ENCODE measurements at regions of chr19 and their contacts with region 1.

Region 1: DNA sequence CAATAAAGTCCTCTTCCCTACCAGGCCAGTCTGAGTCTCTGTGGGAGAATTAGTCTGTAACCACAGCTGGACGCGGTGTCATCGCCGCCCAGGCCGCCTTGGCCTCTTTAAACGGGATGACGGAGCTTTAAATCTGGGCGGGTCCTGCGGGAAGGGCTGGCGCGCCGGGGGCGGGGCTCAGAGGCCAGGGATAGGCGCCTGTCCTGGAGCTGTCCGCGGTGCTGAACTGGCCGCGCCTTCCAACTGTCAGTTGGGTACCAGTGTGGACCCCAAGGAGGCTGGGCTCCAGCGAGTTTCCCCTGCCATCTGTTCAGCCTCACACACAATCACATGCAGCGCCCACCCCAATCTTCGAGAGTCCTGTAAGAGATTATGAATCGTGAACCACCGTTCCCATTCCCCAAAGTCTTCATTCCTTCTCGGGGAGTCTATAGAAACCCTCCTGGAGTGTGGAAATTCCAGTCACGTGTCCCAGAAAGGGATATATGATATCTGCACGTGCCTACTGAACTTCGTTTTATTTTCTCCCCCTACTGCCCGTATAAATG is 11.5 kb downstream of the APLP1 start:
- DNase-seq: peak; percentile 91 to 95
- H3K4me3 ChIP-seq: no peak overlapping the region
- H3K4me3 Mint-ChIP-seq: no peak overlapping the region
- H3K27ac Mint-ChIP-seq: no peak overlapping the region
- H3K4me1 ChIP-seq: no peaks in the 10 kb centered on the region
- H3K4me1 Mint-ChIP-seq: peaks cover 10% of the 10 kb centered on the region
- H3K27me3 ChIP-seq: peaks cover 1% of the 10 kb centered on the region; the same call in 1 of the 2 replicates
- H3K27me3 Mint-ChIP-seq: peaks cover 21% of the 10 kb centered on the region
- CTCF ChIP-seq: no peak

Region 2: DNA sequence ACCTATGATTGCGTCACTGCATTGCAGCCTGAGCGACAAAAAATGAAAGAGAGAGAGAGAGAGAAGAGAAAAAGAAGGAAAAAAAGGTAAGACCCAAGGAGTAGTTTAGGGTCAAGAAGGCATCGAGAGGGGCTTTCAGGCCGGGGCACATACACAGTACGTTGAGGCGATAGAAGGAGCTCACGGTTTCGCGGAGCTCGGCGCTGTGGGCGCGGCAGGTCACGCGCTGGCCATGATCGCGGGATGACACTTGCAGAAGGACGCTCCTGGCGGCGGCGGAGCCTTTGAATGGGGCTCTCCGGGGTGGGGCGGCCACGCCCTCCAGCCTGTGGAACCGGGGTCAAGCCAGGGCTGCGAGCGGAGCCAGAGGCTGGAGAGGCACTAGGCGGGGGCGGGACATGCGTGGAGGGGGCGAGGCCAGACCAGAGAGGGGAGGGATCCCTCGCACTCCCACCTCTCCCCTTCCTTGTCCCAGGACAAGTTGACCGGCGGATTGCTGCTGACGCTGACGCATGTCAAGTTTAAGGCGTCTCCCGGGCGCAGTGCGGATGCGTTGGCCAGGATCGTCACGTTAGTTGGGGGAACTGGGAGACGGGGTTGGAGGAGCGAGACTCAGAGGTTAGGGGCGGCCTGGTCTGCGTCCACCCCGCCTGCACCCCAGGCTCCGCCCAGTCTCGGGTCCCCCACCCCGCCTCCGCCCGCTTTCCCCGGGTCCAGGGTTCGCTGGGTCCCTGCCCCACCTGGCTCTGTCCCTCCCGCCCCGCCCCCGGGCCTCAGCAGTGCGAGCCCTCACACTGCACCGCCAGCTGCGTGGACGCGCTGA is 34.4 kb before region 1 on chr19:
- CTCF ChIA-PET with region 1: no interaction called
- POLR2A ChIA-PET with region 1: no interaction called
- intact Hi-C with region 1: no loop called
- DNase-seq: peak; percentile 82 to 83
- H3K4me3 ChIP-seq: peak overlapping the region; percentile 59
- H3K4me3 Mint-ChIP-seq: peak overlapping the region; percentile 77
- H3K27ac Mint-ChIP-seq: no peak overlapping the region
- H3K4me1 ChIP-seq: peaks cover 12% of the 10 kb centered on the region
- H3K4me1 Mint-ChIP-seq: peaks cover 22% of the 10 kb centered on the region
- H3K27me3 ChIP-seq: no peaks in the 10 kb centered on the region; the same call in 1 of the 2 replicates
- H3K27me3 Mint-ChIP-seq: peaks cover 23% of the 10 kb centered on the region
- CTCF ChIP-seq: no peak

Region 3: DNA sequence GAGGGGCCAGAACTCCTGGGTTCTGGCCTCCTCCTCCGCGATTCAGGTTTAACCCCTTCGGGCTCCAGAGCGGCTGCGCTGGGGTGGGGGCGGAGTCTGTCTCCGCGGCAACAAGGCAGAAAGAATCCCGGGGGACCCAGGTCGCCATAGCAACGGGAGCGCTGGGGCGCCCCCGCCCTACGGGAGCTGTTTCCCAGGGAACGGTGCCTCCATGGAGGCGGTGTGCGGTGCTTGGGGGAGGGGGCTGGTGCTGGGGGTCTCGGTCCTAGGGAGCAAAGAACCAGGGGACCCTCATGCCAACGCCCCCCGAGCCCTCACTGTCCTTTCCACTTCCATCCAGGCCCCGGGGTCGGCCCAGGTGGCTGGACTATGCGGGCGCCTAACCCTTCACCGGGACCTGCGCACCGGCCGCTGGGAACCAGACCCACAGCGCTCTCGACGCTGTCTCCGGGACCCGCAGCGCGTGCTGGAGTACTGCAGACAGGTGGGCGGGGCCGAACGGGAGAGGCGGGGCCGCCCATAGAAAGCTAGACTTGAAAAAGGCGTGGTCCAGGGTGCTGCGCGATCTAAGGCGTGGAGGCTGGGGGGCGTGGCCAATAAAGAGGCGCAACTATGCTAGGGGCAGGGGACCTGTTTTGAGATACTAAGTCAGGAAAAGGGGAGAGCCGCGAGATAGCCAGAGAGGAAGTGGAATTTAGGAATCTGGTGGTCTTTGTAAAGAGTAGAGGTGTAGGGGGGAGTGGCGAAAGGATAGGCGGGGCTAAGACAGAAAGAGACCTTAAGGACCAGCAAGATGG is 10.3 kb before region 1 on chr19:
- CTCF ChIA-PET with region 1: interaction called, 3 read pairs
- POLR2A ChIA-PET with region 1: no interaction called
- intact Hi-C with region 1: loop called (anchors 1 kb)
- DNase-seq: peak; percentile 86 to 90
- H3K4me3 ChIP-seq: peak overlapping the region; percentile 46
- H3K4me3 Mint-ChIP-seq: peak overlapping the region; percentile 75
- H3K27ac Mint-ChIP-seq: no peak overlapping the region
- H3K4me1 ChIP-seq: peaks cover 23% of the 10 kb centered on the region
- H3K4me1 Mint-ChIP-seq: peaks cover 9% of the 10 kb centered on the region
- H3K27me3 ChIP-seq: no peaks in the 10 kb centered on the region; the same call in 1 of the 2 replicates
- H3K27me3 Mint-ChIP-seq: peaks cover 31% of the 10 kb centered on the region
- CTCF ChIP-seq: no peak

Region 4: DNA sequence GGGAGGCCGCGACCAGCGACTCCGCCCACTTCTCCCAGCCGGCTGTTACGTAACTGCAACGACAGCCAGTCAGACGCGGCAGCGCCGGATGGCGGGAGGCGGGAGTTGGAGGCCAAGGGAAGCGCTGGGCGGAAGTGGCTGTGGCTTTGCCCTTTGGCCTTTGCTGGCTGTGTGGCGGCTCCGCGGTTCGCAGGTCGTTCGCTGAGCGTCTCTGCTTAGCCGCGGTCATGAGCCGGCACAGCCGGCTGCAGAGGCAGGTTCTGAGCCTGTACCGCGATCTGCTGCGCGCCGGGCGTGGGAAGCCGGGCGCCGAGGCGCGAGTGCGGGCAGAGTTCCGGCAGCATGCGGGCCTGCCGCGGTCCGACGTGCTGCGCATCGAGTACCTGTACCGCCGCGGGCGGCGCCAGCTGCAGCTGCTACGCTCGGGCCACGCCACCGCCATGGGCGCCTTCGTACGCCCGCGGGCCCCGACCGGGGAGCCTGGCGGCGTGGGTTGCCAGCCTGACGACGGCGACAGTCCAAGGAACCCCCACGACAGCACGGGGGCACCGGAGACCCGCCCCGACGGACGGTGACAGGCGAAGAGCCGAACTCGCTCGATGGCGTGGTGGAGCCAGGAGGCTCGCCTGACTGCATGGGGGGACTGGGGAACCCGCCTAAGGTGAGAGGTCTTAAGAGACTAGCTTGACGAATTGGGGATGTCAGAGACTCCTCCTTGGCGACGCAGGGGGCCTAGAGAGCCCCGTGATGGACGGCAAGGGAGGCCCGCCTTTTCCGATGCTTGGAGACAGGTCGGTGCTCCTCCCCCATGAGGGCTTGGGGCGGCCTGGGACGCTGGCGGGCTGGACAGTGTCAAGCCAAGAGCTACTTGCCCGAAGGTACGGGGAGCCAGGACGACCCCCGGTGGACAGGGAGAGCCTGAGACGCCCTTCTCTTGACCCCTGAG is 115.5 kb after region 1 on chr19 and contains the start of gene SDHAF1:
- CTCF ChIA-PET with region 1: no interaction called
- POLR2A ChIA-PET with region 1: no interaction called
- intact Hi-C with region 1: no loop called
- DNase-seq: peak; percentile 97
- H3K4me3 ChIP-seq: peak within 1 kb of the TSS; percentile 98
- H3K4me3 Mint-ChIP-seq: peak within 1 kb of the TSS; percentile 95
- H3K27ac Mint-ChIP-seq: peak within 1 kb of the TSS; percentile 93
- H3K4me1 ChIP-seq: no peaks in the 10 kb centered on the region
- H3K4me1 Mint-ChIP-seq: peaks cover 11% of the 10 kb centered on the region
- H3K27me3 ChIP-seq: no peaks in the 10 kb centered on the region
- H3K27me3 Mint-ChIP-seq: no peaks in the 10 kb centered on the region
- CTCF ChIP-seq: no peak
- total RNA-seq, gene SDHAF1: 26.2 and 28.1 TPM in 2 replicates

Region 5: DNA sequence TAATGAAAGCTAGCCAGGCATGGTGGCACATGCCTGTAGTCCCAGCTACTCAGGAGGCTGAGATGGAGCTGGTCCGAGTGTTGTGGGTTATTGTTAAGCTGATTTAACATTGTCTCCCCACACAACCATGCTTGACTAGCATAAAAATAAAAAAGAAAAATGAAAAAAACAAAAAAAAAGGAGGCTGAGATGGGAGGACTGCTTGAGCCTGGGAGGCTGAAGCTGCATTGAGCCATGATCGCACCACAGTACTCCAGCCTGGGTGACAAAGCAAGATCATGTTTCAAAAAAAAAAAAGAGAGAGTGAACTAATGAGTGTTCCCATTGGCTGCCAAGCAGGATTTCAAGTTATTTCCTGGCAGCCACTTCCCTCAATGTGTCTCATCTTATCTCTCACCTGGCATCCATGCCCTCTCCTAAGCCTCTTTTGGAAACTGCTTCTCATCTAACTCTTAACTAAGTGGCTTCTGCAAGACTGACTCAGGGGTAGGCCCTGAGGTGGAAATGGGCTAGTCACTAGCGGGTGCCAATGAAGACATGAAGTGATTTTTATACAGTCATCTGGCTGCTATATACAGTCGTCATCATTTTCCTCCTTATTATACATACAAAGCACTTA is 169.3 kb after region 1 on chr19:
- CTCF ChIA-PET with region 1: no interaction called
- POLR2A ChIA-PET with region 1: no interaction called
- intact Hi-C with region 1: no loop called
- DNase-seq: no peak
- H3K4me3 ChIP-seq: no peak overlapping the region
- H3K4me3 Mint-ChIP-seq: no peak overlapping the region
- H3K27ac Mint-ChIP-seq: no peak overlapping the region
- H3K4me1 ChIP-seq: 0 out of 2 replicates have a peak, but pooled peaks cover 4% of the 10 kb centered on the region
- H3K4me1 Mint-ChIP-seq: peaks cover 7% of the 10 kb centered on the region
- H3K27me3 ChIP-seq: no peaks in the 10 kb centered on the region
- H3K27me3 Mint-ChIP-seq: no peaks in the 10 kb centered on the region
- CTCF ChIP-seq: no peak